ENCODE measurements at regions of chr10 and their contacts with region 1.

Region 1: GRCh38 chr10:22436884-22437619 is 91.8 kb downstream of the SPAG6 start:
- DNase-seq: peak; percentile 79 to 94 (median 91)
- H3K4me3 ChIP-seq: peak overlapping the region; percentile 78
- H3K4me3 Mint-ChIP-seq: peak overlapping the region; percentile 91 to 99 (median 96)
- H3K27ac ChIP-seq: peak overlapping the region; percentile 90
- H3K27ac Mint-ChIP-seq: peak overlapping the region; percentile 95 to 100 (median 98)
- H3K4me1 ChIP-seq: peaks cover 20% of the 10 kb centered on the region
- H3K4me1 Mint-ChIP-seq: peaks cover 34 to 43% (median 40%) of the 10 kb centered on the region in 3 donors
- H3K27me3 ChIP-seq: no peaks in the 10 kb centered on the region
- H3K27me3 Mint-ChIP-seq: peaks cover 3 to 4% of the 10 kb centered on the region in 2 donors

Region 2: GRCh38 chr10:21993360-21994001 is 443.6 kb before region 1 on chr10:
- CTCF ChIA-PET with region 1: interaction called, 12 read pairs
- POLR2A ChIA-PET with region 1: interaction called, 3 read pairs
- DNase-seq: peak in 2 of 5 donors; percentile 42 to 44
- H3K4me3 ChIP-seq: no peak overlapping the region
- H3K4me3 Mint-ChIP-seq: no peak overlapping the region
- H3K27ac ChIP-seq: no peak overlapping the region
- H3K27ac Mint-ChIP-seq: no peak overlapping the region
- H3K4me1 ChIP-seq: no peaks in the 10 kb centered on the region
- H3K4me1 Mint-ChIP-seq: peaks cover 36 to 54% (median 46%) of the 10 kb centered on the region in 3 donors
- H3K27me3 ChIP-seq: no peaks in the 10 kb centered on the region
- H3K27me3 Mint-ChIP-seq: no peaks in the 10 kb centered on the region

Region 3: DNA sequence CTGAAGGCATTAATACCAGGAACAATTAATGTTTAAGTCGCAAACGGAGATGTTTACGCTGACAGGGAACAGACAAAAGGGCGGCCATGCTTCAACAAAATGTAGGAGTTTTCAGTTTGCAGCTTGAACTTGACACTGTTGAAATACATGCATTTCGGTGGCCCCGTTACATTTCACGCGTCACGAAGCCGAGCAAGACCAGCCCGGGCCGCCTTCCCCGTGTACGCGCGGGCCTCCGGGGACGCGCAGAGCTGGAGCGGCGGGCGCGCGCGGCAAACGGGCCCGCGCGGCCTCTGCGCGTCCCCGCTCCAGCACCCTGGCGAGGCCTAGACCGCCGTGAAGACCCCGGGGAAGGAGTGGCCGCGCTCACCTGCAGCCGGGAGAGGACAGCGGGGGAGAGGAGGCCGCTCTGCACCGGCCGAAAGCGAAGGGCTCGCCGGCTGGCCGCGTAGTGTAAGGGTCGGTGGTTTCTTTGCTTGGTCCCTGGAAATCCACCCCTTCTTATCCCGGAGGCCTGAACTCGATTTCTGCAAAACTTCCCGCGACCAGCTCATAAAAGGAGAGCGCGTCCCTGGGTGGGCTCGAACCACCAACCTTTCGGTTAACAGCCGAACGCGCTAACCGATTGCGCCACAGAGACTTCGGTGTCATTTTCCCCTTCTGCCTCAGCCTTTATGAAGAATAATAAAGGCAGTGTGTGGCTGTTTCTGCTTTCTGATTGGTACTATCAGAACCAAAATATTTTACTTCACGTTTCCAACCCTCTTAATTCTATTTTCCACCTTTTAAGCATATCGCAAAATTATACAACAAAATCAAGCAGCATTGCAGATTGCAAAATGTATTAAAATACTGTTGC is 207.9 kb before region 1 on chr10:
- CTCF ChIA-PET with region 1: interaction called, 8 read pairs
- POLR2A ChIA-PET with region 1: interaction called, 16 read pairs
- DNase-seq: peak; percentile 73 to 91 (median 88)
- H3K4me3 ChIP-seq: peak overlapping the region; percentile 71
- H3K4me3 Mint-ChIP-seq: peak overlapping the region; percentile 81 to 98 (median 88)
- H3K27ac ChIP-seq: peak overlapping the region; percentile 76
- H3K27ac Mint-ChIP-seq: peak overlapping the region; percentile 92 to 99 (median 96)
- H3K4me1 ChIP-seq: peaks cover 8% of the 10 kb centered on the region
- H3K4me1 Mint-ChIP-seq: peaks cover 18 to 31% (median 28%) of the 10 kb centered on the region in 3 donors
- H3K27me3 ChIP-seq: no peaks in the 10 kb centered on the region
- H3K27me3 Mint-ChIP-seq: peaks cover 15 to 17% of the 10 kb centered on the region in 2 donors

Region 4: DNA sequence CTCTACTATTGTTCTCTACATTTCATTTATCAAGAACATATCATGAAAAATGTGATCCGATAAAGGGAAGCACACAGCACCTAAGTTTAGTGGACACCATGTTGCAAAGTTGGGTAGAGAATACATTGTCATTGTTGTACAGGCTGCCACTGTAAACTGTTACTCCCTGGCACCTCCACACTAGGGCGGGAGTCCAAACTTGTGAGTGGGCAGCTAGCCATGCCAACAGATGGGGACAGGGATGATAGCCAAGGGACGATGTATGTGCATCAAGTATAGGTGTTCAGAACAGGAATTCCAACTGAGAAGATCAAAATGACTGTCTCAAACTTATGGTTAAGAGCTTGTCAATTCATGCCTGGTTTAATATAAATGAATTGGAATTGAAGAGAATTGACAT is 151.9 kb before region 1 on chr10:
- CTCF ChIA-PET with region 1: no interaction called
- POLR2A ChIA-PET with region 1: no interaction called
- DNase-seq: no peak
- H3K4me3 ChIP-seq: no peak overlapping the region
- H3K4me3 Mint-ChIP-seq: no peak overlapping the region
- H3K27ac ChIP-seq: no peak overlapping the region
- H3K27ac Mint-ChIP-seq: peak overlapping the region in 1 of 8 donors; percentile 7
- H3K4me1 ChIP-seq: no peaks in the 10 kb centered on the region
- H3K4me1 Mint-ChIP-seq: no peaks in the 10 kb centered on the region
- H3K27me3 ChIP-seq: no peaks in the 10 kb centered on the region
- H3K27me3 Mint-ChIP-seq: peaks cover 4 to 31% of the 10 kb centered on the region in 2 donors

Region 5: GRCh38 chr10:22316285-22317120 is 120.5 kb before region 1 on chr10 and contains the start of gene COMMD3:
- CTCF ChIA-PET with region 1: interaction called, 7 read pairs
- POLR2A ChIA-PET with region 1: interaction called, 20 read pairs
- DNase-seq: peak; percentile 70 to 85 (median 77)
- H3K4me3 ChIP-seq: peak within 1 kb of the TSS; percentile 85
- H3K4me3 Mint-ChIP-seq: peak within 1 kb of the TSS; percentile 90 to 96 (median 94)
- H3K27ac ChIP-seq: peak within 1 kb of the TSS; percentile 82
- H3K27ac Mint-ChIP-seq: peak within 1 kb of the TSS; percentile 87 to 98 (median 96)
- H3K4me1 ChIP-seq: peaks cover 35% of the 10 kb centered on the region
- H3K4me1 Mint-ChIP-seq: peaks cover 25 to 47% (median 47%) of the 10 kb centered on the region in 3 donors
- H3K27me3 ChIP-seq: peaks cover 6% of the 10 kb centered on the region
- H3K27me3 Mint-ChIP-seq: peaks cover 4 to 21% of the 10 kb centered on the region in 2 donors
- total RNA-seq, gene COMMD3: 80.2 to 80.4 TPM

Region 6: GRCh38 chr10:22351131-22351703 is 85.8 kb before region 1 on chr10:
- CTCF ChIA-PET with region 1: no interaction called
- POLR2A ChIA-PET with region 1: no interaction called
- DNase-seq: no peak
- H3K4me3 ChIP-seq: no peak overlapping the region
- H3K4me3 Mint-ChIP-seq: no peak overlapping the region
- H3K27ac ChIP-seq: no peak overlapping the region
- H3K27ac Mint-ChIP-seq: no peak overlapping the region
- H3K4me1 ChIP-seq: no peaks in the 10 kb centered on the region
- H3K4me1 Mint-ChIP-seq: peaks cover 0 to 2% (median 2%) of the 10 kb centered on the region in 3 donors
- H3K27me3 ChIP-seq: peaks cover under 1% of the 10 kb centered on the region
- H3K27me3 Mint-ChIP-seq: peaks cover 6 to 33% of the 10 kb centered on the region in 2 donors

Region 7: GRCh38 chr10:22988581-22989360 is 551.7 kb after region 1 on chr10:
- CTCF ChIA-PET with region 1: interaction called, 13 read pairs
- POLR2A ChIA-PET with region 1: no interaction called
- DNase-seq: peak; percentile 43 to 78 (median 69)
- H3K4me3 ChIP-seq: no peak overlapping the region
- H3K4me3 Mint-ChIP-seq: peak overlapping the region in 1 of 7 donors; percentile 9
- H3K27ac ChIP-seq: no peak overlapping the region
- H3K27ac Mint-ChIP-seq: peak overlapping the region in 3 of 8 donors; percentile 47 to 57 (median 51)
- H3K4me1 ChIP-seq: no peaks in the 10 kb centered on the region
- H3K4me1 Mint-ChIP-seq: peaks cover 8 to 17% (median 17%) of the 10 kb centered on the region in 3 donors
- H3K27me3 ChIP-seq: no peaks in the 10 kb centered on the region
- H3K27me3 Mint-ChIP-seq: peaks cover 4 to 8% of the 10 kb centered on the region in 2 donors